ENCODE measurements at regions of chr3 and their contacts with region 1.

Region 1: DNA sequence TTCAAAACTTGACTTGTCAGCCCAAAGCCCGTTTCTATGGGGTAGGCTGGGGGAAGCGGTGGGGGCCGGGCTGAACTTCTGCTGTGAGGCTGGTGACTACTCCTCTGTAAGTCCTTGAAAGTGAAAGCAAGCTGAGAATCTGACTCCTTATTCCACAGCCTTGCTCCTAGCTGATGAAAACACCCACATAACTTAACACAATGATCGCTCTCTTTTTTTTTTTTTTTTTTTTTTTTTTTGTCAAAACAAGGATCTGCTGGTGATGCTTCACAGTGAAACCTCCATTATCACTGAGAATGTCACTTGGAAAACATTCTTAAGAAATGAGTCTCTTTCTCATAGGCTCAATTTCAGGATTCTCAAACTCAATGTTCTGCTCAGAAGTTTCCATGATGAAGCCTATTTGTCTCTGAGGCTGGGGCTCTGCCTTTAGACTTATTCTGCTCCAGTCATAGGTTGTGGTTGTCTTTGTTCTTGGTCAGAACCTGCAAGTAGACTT is 31.4 kb upstream of the TKT start:
- DNase-seq: no peak
- H3K4me3 ChIP-seq: no peak overlapping the region
- H3K27ac ChIP-seq: no peak overlapping the region
- H3K4me1 ChIP-seq: no peaks in the 10 kb centered on the region
- H3K27me3 ChIP-seq: no peaks in the 10 kb centered on the region
- CTCF ChIP-seq: no peak

Region 2: GRCh38 chr3:53211706-53212702 is 75.2 kb before region 1 on chr3:
- CTCF ChIA-PET with region 1: no interaction called
- POLR2A ChIA-PET with region 1: no interaction called
- intact Hi-C with region 1: no loop called
- DNase-seq: no peak
- H3K4me3 ChIP-seq: no peak overlapping the region
- H3K27ac ChIP-seq: no peak overlapping the region
- H3K4me1 ChIP-seq: no peaks in the 10 kb centered on the region
- H3K27me3 ChIP-seq: no peaks in the 10 kb centered on the region
- CTCF ChIP-seq: no peak

Region 3: GRCh38 chr3:53311882-53312281 is 24.7 kb after region 1 on chr3:
- CTCF ChIA-PET with region 1: interaction called, 12 read pairs
- POLR2A ChIA-PET with region 1: interaction called, 14 read pairs
- intact Hi-C with region 1: no loop called
- DNase-seq: no peak
- H3K4me3 ChIP-seq: no peak overlapping the region
- H3K27ac ChIP-seq: no peak overlapping the region
- H3K4me1 ChIP-seq: no peaks in the 10 kb centered on the region
- H3K27me3 ChIP-seq: no peaks in the 10 kb centered on the region
- CTCF ChIP-seq: no peak

Region 4: GRCh38 chr3:53320697-53321096 is 33.5 kb after region 1 on chr3:
- CTCF ChIA-PET with region 1: interaction called, 12 read pairs
- POLR2A ChIA-PET with region 1: no interaction called
- intact Hi-C with region 1: no loop called
- DNase-seq: peak in 1 of 2 experiments; percentile 45
- H3K4me3 ChIP-seq: no peak overlapping the region
- H3K27ac ChIP-seq: no peak overlapping the region
- H3K4me1 ChIP-seq: no peaks in the 10 kb centered on the region
- H3K27me3 ChIP-seq: no peaks in the 10 kb centered on the region
- CTCF ChIP-seq: no peak